MCF 10A (cell line): ENCODE measurements at regions of chr21 and their contacts with region 1.

Region 1: DNA sequence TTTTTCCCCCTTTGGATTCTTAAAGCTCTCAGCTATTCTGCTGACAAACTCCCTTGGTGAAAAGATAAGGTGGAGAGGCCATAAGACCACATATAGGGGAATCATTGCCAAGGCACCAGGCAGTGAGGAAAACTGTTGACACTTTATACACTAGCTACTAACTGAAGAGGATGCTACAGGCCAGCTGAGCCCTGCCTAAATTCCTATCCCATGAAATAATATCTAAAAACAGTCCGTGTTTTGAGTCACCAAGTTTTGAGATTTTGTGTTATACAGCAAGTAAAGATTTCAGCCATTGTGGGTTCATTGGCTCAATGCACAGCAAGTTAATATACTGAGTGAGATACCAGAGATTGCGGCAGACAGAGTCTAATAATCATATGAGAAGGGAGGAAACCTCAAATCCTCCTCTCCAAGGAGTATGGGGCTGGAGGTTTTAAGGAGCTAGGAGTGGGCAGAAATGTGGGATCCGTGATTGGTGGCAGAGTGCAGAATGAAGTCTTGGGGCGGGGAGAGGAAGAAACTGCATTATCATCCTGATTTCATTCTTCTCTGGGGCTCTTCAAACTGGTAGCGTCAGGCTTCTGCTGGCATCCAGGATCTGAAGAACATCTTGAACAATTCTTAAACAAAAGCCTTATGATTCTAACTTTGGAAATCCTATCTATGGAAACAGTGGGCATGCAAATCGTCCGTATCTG is 9.2 kb downstream of the CLDN8 start:
- DNase-seq: peak; percentile 14
- H3K4me3 Mint-ChIP-seq: no peak overlapping the region
- H3K27ac Mint-ChIP-seq: peak overlapping the region; percentile 25
- H3K4me1 Mint-ChIP-seq: peaks cover 7% of the 10 kb centered on the region
- H3K27me3 Mint-ChIP-seq: no peaks in the 10 kb centered on the region
- CTCF ChIP-seq: no peak

Region 2: DNA sequence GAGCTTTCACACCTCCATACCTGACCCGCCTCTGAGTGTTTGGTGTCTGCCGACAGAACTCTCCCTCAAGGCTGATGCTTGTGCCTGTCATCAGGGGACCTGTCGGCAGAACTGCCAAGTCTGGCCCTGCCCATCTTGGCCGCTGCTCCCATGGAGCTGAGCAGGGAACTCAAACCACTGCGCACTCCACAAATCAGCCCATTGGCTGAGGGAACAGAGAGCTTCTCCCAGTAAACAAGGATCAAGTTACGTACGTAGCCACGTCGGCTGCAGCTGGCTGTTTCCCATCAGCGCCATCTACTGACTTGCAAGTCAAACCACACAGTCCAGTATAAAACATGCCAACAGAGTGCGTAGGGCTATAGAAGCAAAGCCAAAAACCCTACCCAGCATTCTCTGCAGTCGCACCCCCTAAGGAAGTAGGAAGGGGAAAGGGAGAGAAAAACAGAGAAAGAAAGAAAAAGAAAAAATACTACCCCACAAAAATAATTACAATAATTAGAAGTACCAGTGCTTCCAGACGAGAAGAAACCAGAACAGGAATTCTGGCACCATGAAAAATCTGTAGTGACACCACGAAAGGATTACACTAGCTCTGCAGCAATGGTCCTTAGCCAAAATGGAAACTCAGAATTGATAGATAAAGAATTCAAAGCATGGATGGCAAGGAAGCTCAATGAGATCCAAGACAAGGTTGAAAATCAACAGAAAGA is 202.2 kb after region 1 on chr21:
- CTCF ChIA-PET with region 1: no interaction called
- POLR2A ChIA-PET with region 1: no interaction called
- intact Hi-C with region 1: loop called (anchors 1 kb)
- DNase-seq: peak; percentile 91
- H3K4me3 Mint-ChIP-seq: peak overlapping the region; percentile 16
- H3K27ac Mint-ChIP-seq: no peak overlapping the region
- H3K4me1 Mint-ChIP-seq: peaks cover 7% of the 10 kb centered on the region
- H3K27me3 Mint-ChIP-seq: peaks cover 94% of the 10 kb centered on the region
- CTCF ChIP-seq: peak; percentile 30